Gastrocnemius medialis (tissue), 4 donors: ENCODE measurements at regions of chr2 and their contacts with region 1.

Region 1: GRCh38 chr2:231146665-231147064 is 21.8 kb upstream of the HTR2B start:
- DNase-seq: no peak
- ATAC-seq: no peak
- H3K4me3 ChIP-seq: no peak overlapping the region
- H3K27ac ChIP-seq: no peak overlapping the region
- H3K4me1 ChIP-seq: no peaks in the 10 kb centered on the region
- H3K27me3 ChIP-seq: no peaks in the 10 kb centered on the region
- CTCF ChIP-seq: no peak
- POLR2A ChIP-seq: no peak

Region 2: DNA sequence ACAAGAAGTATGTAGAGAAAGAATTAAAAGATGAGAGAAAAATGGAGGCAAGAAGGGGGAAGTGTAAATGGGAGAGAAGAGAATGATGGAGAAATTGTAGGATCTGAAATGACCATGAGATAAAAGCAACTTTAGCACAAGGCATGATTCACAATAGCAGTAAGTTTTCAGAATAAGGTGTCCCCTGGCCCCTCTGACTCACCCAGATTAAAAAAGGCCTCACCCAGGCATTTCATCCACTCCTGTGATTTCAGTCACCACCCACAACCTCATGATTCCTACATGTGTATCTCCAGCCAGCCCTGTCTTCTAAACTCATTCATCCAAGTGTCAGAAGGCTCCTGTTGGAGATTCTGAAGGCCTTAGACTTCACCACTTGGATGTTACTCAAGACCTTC is 674.0 kb before region 1 on chr2:
- in situ Hi-C with region 1: no loop called
- intact Hi-C with region 1: no loop called
- DNase-seq: no peak
- ATAC-seq: no peak
- H3K4me3 ChIP-seq: no peak overlapping the region
- H3K27ac ChIP-seq: no peak overlapping the region
- H3K4me1 ChIP-seq: no peaks in the 10 kb centered on the region
- H3K27me3 ChIP-seq: no peaks in the 10 kb centered on the region
- CTCF ChIP-seq: no peak
- POLR2A ChIP-seq: no peak

Region 3: DNA sequence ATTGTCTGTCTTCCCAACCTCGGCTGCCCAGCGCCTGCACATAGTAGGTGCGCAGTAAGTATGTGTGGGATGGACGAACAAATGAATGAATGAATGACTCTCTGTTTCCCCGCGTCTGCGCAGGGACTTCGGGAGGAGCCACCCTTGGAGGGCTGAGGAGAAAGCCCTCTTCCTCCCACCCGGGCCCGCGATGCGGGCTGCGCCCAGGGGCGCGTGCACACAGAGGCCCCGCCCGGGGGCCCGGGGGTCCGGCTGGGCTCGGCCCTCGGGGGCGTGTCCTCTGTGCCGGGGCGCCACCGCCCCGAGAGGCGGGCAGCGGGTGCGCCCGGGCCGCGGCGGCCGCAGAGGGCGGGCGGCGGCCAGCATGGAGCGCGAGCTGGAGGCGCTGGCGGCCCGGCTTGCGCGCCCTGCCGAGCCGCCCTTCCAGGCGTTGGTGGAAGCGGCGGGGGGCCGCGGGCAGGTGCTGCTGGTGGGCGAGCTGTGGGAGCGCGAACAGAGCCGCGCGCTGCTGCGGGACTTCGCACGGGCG is 109.4 kb before region 1 on chr2 and contains the start of gene C2orf72:
- in situ Hi-C with region 1: no loop called
- intact Hi-C with region 1: no loop called
- DNase-seq: no peak
- ATAC-seq: no peak
- H3K4me3 ChIP-seq: no peak within 1 kb of the TSS
- H3K27ac ChIP-seq: no peak within 1 kb of the TSS
- H3K4me1 ChIP-seq: no peaks in the 10 kb centered on the region
- H3K27me3 ChIP-seq: peaks cover 25 to 48% (median 26%) of the 10 kb centered on the region in 3 donors
- CTCF ChIP-seq: no peak
- POLR2A ChIP-seq: no peak
- total RNA-seq, gene C2orf72: 0.10 to 0.44 (median 0.15) TPM in 3 of 4 donors, not detected in the other

Region 4: GRCh38 chr2:231063347-231063746 is 83.3 kb before region 1 on chr2:
- in situ Hi-C with region 1: no loop called
- intact Hi-C with region 1: loop called (anchors 5 kb)
- DNase-seq: no peak
- ATAC-seq: no peak
- H3K4me3 ChIP-seq: no peak overlapping the region
- H3K27ac ChIP-seq: no peak overlapping the region
- H3K4me1 ChIP-seq: peaks cover 28 to 30% of the 10 kb centered on the region in 2 donors
- H3K27me3 ChIP-seq: no peaks in the 10 kb centered on the region
- CTCF ChIP-seq: no peak
- POLR2A ChIP-seq: no peak

Region 5: GRCh38 chr2:231161877-231162329 is 15.2 kb after region 1 on chr2:
- in situ Hi-C with region 1: no loop called
- intact Hi-C with region 1: no loop called
- DNase-seq: no peak
- ATAC-seq: peak; percentile 43 to 60
- H3K4me3 ChIP-seq: no peak overlapping the region
- H3K27ac ChIP-seq: peak overlapping the region in 3 of 4 donors; percentile 21 to 38 (median 35)
- H3K4me1 ChIP-seq: no peaks in the 10 kb centered on the region
- H3K27me3 ChIP-seq: no peaks in the 10 kb centered on the region
- CTCF ChIP-seq: no peak
- POLR2A ChIP-seq: no peak